HAP-1 (cell line): ENCODE measurements at regions of chr7 and their contacts with region 1.

Region 1: DNA sequence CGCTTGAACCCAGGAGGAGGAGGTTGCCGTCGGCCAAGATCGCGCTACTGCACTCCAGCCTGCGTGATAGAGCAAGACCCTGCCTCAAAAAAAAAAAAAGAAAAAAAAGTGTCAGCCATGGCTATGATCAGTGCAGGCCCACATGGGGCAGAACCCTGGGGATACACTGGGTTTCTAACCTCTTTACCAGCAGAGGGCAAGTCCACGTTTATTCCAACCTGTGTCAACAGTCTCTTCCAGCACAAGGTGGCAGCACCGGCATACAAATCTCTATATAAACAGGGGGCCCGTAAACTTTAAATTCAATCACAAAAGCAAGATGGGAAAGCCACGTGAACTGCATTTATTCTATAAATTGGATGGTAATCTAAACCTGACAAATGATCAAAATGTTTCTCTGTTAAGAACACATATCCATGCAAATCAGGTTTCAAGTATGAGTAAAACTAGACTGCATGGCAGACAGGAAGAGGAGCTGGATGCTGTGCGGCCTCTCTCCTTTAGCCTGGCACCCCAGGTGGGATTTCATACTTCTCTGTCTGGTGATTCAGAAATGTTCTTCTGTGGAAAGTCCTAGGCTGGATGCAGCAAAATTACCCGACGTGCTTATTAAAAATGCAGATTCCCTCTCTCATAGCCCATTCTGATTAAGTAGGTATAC is 60.0 kb upstream of the STEAP1B start:
- DNase-seq: peak; percentile 80 to 83
- H3K4me3 ChIP-seq: no peak overlapping the region
- H3K4me1 ChIP-seq: peaks cover 29% of the 10 kb centered on the region
- H3K27me3 ChIP-seq: no peaks in the 10 kb centered on the region

Region 2: GRCh38 chr7:22269963-22270362 is 290.0 kb before region 1 on chr7:
- in situ Hi-C with region 1: no loop called
- DNase-seq: no peak
- H3K4me3 ChIP-seq: no peak overlapping the region
- H3K4me1 ChIP-seq: peaks cover 10% of the 10 kb centered on the region
- H3K27me3 ChIP-seq: no peaks in the 10 kb centered on the region

Region 3: DNA sequence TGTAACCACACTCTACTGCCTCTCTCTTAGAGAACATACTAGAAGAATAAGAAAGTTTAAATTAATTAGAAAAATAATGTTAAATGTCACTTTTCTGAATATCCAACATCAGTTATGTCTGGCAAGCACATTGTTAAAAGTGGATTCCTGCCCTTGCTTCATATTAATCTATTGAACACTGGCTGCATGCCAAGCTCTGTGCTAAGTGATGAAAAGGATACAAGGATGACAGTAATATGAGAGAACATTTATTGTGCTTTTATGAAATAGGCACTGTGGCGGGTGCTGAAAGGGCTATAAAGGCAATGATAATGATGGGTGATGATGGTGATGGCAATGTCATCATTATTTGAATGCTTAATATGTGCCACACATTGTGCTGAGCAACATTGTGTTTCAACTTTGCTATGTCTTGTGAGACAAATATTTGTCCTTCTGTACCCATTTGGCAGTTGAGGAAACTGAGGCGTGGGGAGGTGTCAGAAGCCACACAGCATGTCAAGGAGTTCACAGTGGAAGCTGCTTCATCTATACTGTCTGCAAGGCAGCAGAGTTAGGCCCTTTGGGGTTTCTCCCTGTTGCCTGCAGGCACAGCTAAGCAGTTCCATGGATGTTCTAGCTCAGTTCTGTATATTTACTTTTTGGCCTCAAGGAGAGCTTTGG is 138.9 kb before region 1 on chr7:
- in situ Hi-C with region 1: no loop called
- DNase-seq: no peak
- H3K4me3 ChIP-seq: no peak overlapping the region
- H3K4me1 ChIP-seq: peaks cover 12% of the 10 kb centered on the region
- H3K27me3 ChIP-seq: no peaks in the 10 kb centered on the region

Region 4: GRCh38 chr7:22694597-22695207 is 134.7 kb after region 1 on chr7:
- in situ Hi-C with region 1: no loop called
- DNase-seq: no peak
- H3K4me3 ChIP-seq: no peak overlapping the region
- H3K4me1 ChIP-seq: no peaks in the 10 kb centered on the region
- H3K27me3 ChIP-seq: peaks cover 13% of the 10 kb centered on the region

Region 5: DNA sequence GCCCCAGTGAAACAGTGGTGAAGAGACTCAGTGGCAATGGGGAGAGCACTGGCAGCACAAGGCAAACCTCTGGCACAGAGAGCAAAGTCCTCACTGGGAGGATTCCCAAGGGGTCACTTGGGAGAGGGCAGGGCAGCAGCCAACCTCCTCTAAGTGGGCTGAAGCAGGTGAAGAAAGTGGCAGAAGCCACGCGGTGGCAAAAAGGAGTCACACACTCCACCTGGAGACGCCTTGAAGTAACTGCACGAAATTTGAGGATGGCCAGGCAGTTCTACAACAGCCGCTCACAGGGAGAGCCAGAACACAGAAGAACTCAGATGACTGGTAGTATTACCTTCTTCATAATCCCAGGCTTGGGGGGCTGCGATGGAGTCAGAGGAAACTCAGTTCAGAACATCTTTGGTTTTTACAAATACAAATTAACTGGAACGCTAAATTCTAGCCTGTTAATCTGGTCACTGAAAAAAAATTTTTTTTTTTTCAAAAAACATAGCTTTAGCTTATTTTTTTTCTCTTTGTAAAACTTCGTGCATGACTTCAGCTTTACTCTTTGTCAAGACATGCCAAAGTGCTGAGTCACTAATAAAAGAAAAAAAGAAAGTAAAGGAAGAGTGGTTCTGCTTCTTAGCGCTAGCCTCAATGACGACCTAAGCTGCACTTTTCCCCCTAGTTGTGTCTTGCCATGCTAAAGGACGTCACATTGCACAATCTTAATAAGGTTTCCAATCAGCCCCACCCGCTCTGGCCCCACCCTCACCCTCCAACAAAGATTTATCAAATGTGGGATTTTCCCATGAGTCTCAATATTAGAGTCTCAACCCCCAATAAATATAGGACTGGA is 166.6 kb after region 1 on chr7:
- in situ Hi-C with region 1: loop called (anchors 5 kb)
- DNase-seq: peak; percentile 77 to 82
- H3K4me3 ChIP-seq: no peak overlapping the region
- H3K4me1 ChIP-seq: peaks cover 8% of the 10 kb centered on the region
- H3K27me3 ChIP-seq: no peaks in the 10 kb centered on the region

Region 6: DNA sequence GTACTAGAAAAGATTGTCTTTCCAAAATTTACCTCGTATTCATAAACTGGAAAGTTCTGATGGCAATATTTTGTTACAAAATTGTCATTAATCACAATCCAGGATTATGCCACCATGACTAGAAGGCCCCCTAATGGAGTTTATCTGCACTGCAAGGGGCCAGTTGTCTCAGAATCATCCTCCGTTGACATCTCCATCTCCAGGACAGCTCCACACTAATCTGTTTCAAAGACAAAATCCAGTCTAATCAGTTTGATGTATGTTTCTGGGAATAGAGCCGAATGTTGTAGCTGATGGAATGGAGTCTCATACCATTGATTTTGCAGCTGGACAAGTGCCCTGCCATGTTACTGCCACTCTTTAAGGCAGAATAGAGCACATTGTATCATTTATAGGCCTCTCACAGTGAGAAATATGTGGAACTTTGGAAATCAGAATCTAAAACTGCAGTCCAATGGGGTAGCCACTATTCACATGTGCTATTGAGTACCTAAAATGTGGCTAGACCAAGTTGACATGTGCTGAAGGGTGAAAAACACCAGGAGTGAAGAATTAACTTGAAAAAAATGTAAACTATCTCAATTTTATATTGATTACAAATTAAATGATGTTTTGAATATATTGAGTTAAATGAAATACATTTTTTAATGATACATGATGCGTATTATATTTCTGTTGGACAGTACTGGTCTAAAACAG is 301.0 kb after region 1 on chr7:
- in situ Hi-C with region 1: loop called (anchors 10 kb)
- DNase-seq: peak; percentile 44 to 68
- H3K4me3 ChIP-seq: no peak overlapping the region
- H3K4me1 ChIP-seq: peaks cover 21% of the 10 kb centered on the region
- H3K27me3 ChIP-seq: no peaks in the 10 kb centered on the region

Region 7: GRCh38 chr7:23055582-23056178 is 495.7 kb after region 1 on chr7:
- in situ Hi-C with region 1: loop called (anchors 5 kb)
- DNase-seq: peak; percentile 76 to 78
- H3K4me3 ChIP-seq: no peak overlapping the region
- H3K4me1 ChIP-seq: no peaks in the 10 kb centered on the region; the same call in 1 of the 2 replicates
- H3K27me3 ChIP-seq: no peaks in the 10 kb centered on the region